ENCODE measurements at regions of chr13 and their contacts with region 1.

Region 1: DNA sequence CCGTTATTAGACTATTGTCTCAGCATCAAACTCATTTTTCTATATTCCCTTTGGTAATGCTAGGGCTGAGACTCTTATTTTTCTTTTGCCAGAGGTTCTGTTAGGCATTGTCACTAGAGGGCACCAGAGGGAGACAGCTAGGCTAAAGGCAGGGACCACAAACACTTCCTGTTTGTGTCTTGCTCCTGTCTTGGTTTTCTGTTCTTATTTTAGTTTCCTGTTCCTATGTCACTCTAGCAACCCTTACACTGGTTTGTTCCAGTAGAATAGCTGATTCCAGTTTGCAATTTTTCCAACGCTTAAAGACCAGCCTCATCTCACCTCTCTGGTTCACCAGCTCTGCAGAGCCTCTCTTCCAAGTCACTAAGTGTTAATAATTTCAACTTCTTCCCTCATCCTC is 772.0 kb downstream of the DIAPH3 start:
- DNase-seq: peak; percentile 75
- H3K4me3 Mint-ChIP-seq: no peak overlapping the region
- H3K27ac Mint-ChIP-seq: no peak overlapping the region
- H3K4me1 Mint-ChIP-seq: no peaks in the 10 kb centered on the region
- H3K27me3 Mint-ChIP-seq: peaks cover 37% of the 10 kb centered on the region
- CTCF ChIP-seq: peak; percentile 71

Region 2: DNA sequence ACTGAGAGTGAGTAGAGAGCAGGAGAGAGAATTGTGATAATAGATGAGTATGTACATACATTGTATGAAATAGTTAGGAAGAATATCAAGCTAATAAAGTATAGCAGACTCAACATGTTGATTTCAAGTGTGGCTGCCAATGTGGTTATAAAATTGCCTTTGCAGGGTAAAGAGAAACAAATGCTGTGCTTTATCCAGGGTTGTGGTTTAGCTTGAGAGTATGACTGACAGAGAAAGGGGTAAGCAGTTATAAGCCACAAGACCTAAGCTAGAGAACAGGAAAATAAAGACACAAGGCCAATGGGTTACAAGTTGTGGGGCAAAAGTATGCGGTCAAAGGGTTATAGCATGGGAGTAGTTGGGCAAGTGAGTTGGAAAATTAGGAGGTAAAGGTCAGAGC is 445.4 kb before region 1 on chr13:
- CTCF ChIA-PET with region 1: no interaction called
- POLR2A ChIA-PET with region 1: no interaction called
- intact Hi-C with region 1: no loop called
- DNase-seq: no peak
- H3K4me3 Mint-ChIP-seq: no peak overlapping the region
- H3K27ac Mint-ChIP-seq: no peak overlapping the region
- H3K4me1 Mint-ChIP-seq: no peaks in the 10 kb centered on the region
- H3K27me3 Mint-ChIP-seq: peaks cover 12% of the 10 kb centered on the region
- CTCF ChIP-seq: no peak

Region 3: DNA sequence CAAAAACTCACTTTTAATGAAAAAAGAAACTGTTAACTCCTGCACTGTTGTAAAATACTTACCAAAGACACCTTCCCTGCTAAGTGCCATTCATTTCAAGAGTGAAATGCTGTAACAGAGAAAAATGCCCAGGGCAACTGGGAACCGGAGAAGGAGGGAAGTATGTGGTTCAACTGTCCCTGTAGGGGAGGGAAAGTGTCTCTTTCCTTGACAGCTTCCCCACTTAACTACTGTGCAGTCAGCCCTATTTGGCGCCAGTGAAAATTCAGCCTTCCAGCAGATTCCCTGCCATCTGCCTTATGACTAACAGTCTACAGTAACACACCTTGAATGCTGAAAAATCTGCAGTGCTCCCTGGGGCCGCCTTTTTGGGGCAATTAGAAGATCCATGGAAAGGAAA is 17.0 kb before region 1 on chr13:
- CTCF ChIA-PET with region 1: interaction called, 10 read pairs
- POLR2A ChIA-PET with region 1: no interaction called
- intact Hi-C with region 1: no loop called
- DNase-seq: no peak
- H3K4me3 Mint-ChIP-seq: no peak overlapping the region
- H3K27ac Mint-ChIP-seq: no peak overlapping the region
- H3K4me1 Mint-ChIP-seq: no peaks in the 10 kb centered on the region
- H3K27me3 Mint-ChIP-seq: peaks cover 58% of the 10 kb centered on the region
- CTCF ChIP-seq: no peak

Region 4: DNA sequence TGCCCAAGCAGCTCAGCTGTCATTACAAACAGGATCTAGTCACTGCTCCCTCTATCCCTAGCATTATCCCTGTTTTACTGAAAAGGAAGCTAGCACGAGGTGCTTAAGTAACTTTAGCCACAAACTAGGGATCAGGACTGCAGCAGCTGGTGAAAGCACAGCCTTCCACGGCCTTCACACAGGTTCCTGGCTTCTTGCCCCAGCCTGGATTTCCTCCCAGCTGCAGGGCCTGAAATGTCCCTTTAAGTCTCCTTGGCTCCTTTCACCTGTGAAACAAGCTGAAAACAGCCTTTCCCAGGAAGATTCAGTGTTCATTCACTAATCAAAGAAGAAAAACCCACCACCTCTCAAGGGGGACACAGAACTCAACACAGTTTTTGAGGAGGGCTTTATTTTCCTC is 17.5 kb after region 1 on chr13:
- CTCF ChIA-PET with region 1: interaction called, 22 read pairs
- POLR2A ChIA-PET with region 1: no interaction called
- intact Hi-C with region 1: no loop called
- DNase-seq: no peak
- H3K4me3 Mint-ChIP-seq: no peak overlapping the region
- H3K27ac Mint-ChIP-seq: no peak overlapping the region
- H3K4me1 Mint-ChIP-seq: no peaks in the 10 kb centered on the region
- H3K27me3 Mint-ChIP-seq: peaks cover 22% of the 10 kb centered on the region
- CTCF ChIP-seq: no peak

Region 5: GRCh38 chr13:59477011-59477410 is 85.3 kb after region 1 on chr13:
- CTCF ChIA-PET with region 1: no interaction called
- POLR2A ChIA-PET with region 1: no interaction called
- intact Hi-C with region 1: no loop called
- DNase-seq: peak; percentile 11
- H3K4me3 Mint-ChIP-seq: no peak overlapping the region
- H3K27ac Mint-ChIP-seq: no peak overlapping the region
- H3K4me1 Mint-ChIP-seq: no peaks in the 10 kb centered on the region
- H3K27me3 Mint-ChIP-seq: peaks cover 34% of the 10 kb centered on the region
- CTCF ChIP-seq: peak; percentile 7

Region 6: DNA sequence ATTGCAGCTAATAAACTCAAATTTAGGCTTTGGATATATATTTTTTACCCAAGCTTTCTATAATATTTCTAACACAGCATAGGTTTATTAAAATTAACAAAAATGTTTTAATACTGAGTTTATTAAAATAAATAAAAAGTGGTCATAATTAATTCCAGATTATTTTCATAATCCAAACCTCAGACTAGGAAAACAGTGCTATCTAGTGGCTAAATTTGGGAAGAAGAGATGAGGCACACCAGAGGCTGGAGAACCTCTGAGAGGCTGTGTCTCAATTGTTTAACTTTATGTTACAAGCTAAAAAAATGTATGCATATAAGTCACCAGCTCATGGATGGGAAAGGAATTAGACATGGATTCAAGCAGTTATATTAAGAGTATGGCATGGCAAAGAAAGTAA is 379.6 kb after region 1 on chr13:
- CTCF ChIA-PET with region 1: interaction called, 27 read pairs
- POLR2A ChIA-PET with region 1: no interaction called
- intact Hi-C with region 1: loop called (anchors 1 kb)
- DNase-seq: no peak
- H3K4me3 Mint-ChIP-seq: no peak overlapping the region
- H3K27ac Mint-ChIP-seq: no peak overlapping the region
- H3K4me1 Mint-ChIP-seq: peaks cover 12% of the 10 kb centered on the region
- H3K27me3 Mint-ChIP-seq: no peaks in the 10 kb centered on the region
- CTCF ChIP-seq: peak; percentile 39

Region 7: GRCh38 chr13:60329221-60329983 is 937.7 kb after region 1 on chr13:
- CTCF ChIA-PET with region 1: interaction called, 23 read pairs
- POLR2A ChIA-PET with region 1: no interaction called
- intact Hi-C with region 1: loop called (anchors 1 kb)
- DNase-seq: peak; percentile 53
- H3K4me3 Mint-ChIP-seq: no peak overlapping the region
- H3K27ac Mint-ChIP-seq: no peak overlapping the region
- H3K4me1 Mint-ChIP-seq: no peaks in the 10 kb centered on the region
- H3K27me3 Mint-ChIP-seq: peaks cover 29% of the 10 kb centered on the region
- CTCF ChIP-seq: peak; percentile 62

Region 8: DNA sequence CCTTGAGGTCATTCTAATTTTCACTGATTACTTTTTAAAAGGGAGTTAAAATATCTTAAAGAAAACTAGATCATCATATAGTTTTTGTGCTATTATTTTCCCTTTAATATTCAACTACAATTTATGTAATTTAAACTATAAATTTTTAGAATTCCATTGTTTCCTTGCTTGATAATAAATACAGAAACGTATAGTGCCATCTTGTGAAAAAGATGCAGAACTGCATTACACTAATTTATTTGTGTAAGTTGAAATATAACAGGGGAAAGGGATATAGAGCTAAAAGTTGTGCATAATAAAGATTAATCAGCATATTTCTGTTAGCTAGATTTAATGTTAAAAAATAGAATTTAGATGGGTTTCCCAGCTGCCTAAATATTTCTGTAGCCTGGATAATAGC is 943.8 kb after region 1 on chr13:
- CTCF ChIA-PET with region 1: interaction called, 23 read pairs
- POLR2A ChIA-PET with region 1: no interaction called
- intact Hi-C with region 1: no loop called
- DNase-seq: peak; percentile 16
- H3K4me3 Mint-ChIP-seq: no peak overlapping the region
- H3K27ac Mint-ChIP-seq: no peak overlapping the region
- H3K4me1 Mint-ChIP-seq: peaks cover 5% of the 10 kb centered on the region
- H3K27me3 Mint-ChIP-seq: peaks cover 76% of the 10 kb centered on the region
- CTCF ChIP-seq: peak; percentile 41

Region 9: GRCh38 chr13:60431108-60431700 is 1039.5 kb after region 1 on chr13:
- CTCF ChIA-PET with region 1: interaction called, 3 read pairs
- POLR2A ChIA-PET with region 1: no interaction called
- intact Hi-C with region 1: loop called (anchors 5 kb)
- DNase-seq: peak; percentile 55
- H3K4me3 Mint-ChIP-seq: no peak overlapping the region
- H3K27ac Mint-ChIP-seq: no peak overlapping the region
- H3K4me1 Mint-ChIP-seq: no peaks in the 10 kb centered on the region
- H3K27me3 Mint-ChIP-seq: no peaks in the 10 kb centered on the region
- CTCF ChIP-seq: peak; percentile 82